OCI-LY7 (cell line): ENCODE measurements at regions of chr6 and their contacts with region 1.

Region 1: GRCh38 chr6:13261464-13261994 is 66.8 kb downstream of the TBC1D7 start:
- DNase-seq: peak; percentile 97
- H3K4me3 ChIP-seq: peak overlapping the region; percentile 59
- H3K27ac ChIP-seq: peak overlapping the region; percentile 94
- H3K4me1 ChIP-seq: peaks cover 63% of the 10 kb centered on the region
- CTCF ChIP-seq: no peak

Region 2: DNA sequence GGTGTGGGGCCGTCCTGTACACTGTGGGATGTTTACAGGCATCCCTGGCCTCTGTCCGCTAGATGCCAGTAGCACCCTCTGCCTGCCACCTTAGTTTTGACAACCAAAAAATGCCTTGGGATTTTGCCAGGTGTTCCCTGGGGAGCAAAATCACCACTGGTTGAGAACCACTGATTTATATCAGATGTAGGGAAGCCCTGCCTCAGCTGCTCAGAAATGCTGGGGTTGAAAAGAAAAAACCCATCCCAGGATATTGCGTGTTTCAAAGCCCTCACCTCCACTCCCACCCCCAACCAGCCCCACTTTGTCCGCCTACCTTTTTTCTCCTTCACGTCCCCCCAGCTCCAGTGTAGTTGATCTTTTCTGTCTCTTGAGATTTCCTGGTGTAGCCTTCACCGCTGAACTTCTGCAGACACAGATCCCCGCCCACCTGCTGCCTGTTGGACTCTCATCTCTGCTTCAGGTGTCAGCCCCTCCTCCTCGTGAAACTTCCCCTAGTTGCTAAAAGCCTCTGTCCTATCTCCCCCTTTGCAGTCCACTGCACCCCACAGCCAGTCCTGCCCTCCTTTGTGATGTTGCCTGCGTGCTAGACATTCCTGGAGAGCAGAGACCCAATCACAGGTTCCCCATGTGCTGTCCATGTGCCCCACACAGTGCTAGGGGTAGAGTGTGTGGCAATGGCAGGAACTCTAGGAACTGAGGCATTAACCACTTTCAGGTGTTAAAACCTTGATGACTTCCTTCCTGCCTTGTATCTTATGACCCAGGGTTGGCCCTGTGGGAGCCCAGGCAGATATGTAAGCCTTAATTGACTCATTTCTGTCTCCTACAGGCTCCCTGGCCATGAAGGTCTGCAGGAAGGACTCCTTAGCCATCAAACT is 32.1 kb before region 1 on chr6:
- CTCF ChIA-PET with region 1: no interaction called
- POLR2A ChIA-PET with region 1: interaction called, 3 read pairs
- intact Hi-C with region 1: loop called (anchors 1 kb)
- DNase-seq: peak; percentile 63
- H3K4me3 ChIP-seq: peak overlapping the region; percentile 2
- H3K27ac ChIP-seq: no peak overlapping the region
- H3K4me1 ChIP-seq: peaks cover 10% of the 10 kb centered on the region
- CTCF ChIP-seq: peak; percentile 75

Region 3: GRCh38 chr6:13296536-13296997 is 35.0 kb after region 1 on chr6:
- CTCF ChIA-PET with region 1: no interaction called
- POLR2A ChIA-PET with region 1: interaction called, 6 read pairs
- intact Hi-C with region 1: loop called (anchors 1 kb)
- DNase-seq: peak; percentile 92
- H3K4me3 ChIP-seq: peak overlapping the region; percentile 33
- H3K27ac ChIP-seq: peak overlapping the region; percentile 71
- H3K4me1 ChIP-seq: peaks cover 69% of the 10 kb centered on the region
- CTCF ChIP-seq: peak; percentile 58

Region 4: GRCh38 chr6:13427801-13428582 is 166.5 kb after region 1 on chr6:
- CTCF ChIA-PET with region 1: no interaction called
- POLR2A ChIA-PET with region 1: interaction called, 3 read pairs
- intact Hi-C with region 1: loop called (anchors 1 kb)
- DNase-seq: peak; percentile 72
- H3K4me3 ChIP-seq: peak overlapping the region; percentile 6
- H3K27ac ChIP-seq: peak overlapping the region; percentile 15
- H3K4me1 ChIP-seq: peaks cover 61% of the 10 kb centered on the region
- CTCF ChIP-seq: peak; percentile 62